ENCODE measurements at regions of chr11 and their contacts with region 1.

Region 1: GRCh38 chr11:33687733-33688479 is 12.7 kb downstream of the C11orf91 start:
- DNase-seq: peak; percentile 88
- H3K4me3 ChIP-seq: no peak overlapping the region
- H3K27ac ChIP-seq: peak overlapping the region; percentile 98
- H3K4me1 ChIP-seq: peaks cover 54% of the 10 kb centered on the region
- H3K27me3 ChIP-seq: no peaks in the 10 kb centered on the region
- CTCF ChIP-seq: peak; percentile 64 to 75

Region 2: DNA sequence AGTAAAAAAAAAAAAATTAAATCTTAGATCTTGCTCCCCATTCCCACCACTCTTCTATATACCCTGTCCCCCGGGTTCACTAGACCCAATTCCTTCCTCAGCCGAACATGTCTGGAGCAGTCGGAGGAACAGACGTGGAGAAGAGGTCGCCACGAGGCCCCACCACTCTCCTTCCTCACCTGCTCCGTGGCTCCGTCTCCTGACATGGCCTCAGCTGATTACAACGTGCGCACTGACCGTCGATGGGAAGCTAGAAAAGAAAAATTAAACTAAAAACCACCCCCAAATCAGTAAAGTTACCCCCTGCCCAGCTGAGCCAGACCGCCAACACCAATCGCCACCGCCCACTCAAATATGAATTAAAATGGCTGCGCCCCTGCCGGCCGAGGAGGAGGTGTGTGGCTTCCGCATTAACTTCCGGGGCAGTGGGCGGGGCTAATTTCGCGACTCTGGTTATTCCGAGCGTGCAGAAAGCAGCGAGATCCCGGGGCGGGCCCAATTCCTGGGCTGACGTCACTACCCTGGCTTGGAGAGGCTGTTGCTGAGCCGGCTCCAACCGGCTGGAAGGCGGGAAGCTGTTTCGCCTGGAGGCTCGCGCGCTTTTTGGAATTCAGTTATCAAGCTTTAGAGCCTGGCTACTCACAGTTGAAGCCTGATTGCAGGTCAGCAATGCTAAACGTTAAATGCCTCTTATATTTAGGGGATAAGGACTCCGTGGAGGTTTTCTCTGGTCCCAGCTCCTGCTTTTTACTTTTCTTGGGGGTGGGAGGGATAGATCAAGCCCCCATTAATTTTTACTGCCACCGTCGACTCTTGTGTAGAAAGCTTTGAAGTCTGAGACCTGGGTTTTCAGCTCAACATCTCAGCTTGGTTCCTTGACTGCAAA is 526.5 kb before region 1 on chr11 and contains the start of gene CSTF3:
- CTCF ChIA-PET with region 1: no interaction called
- dilution Hi-C with region 1: loop called (anchors 5 kb)
- in situ Hi-C with region 1: loop called (anchors 25 kb)
- intact Hi-C with region 1: loop called (anchors 1 kb)
- DNase-seq: peak; percentile 97
- H3K4me3 ChIP-seq: peak within 1 kb of the TSS; percentile 87 to 100 (median 99)
- H3K27ac ChIP-seq: peak within 1 kb of the TSS; percentile 97
- H3K4me1 ChIP-seq: peaks cover 24% of the 10 kb centered on the region
- H3K27me3 ChIP-seq: no peaks in the 10 kb centered on the region
- CTCF ChIP-seq: peak; percentile 2 to 38
- total RNA-seq, gene CSTF3: 21.3 to 32.9 TPM

Region 3: GRCh38 chr11:33362051-33362910 is 325.6 kb before region 1 on chr11:
- CTCF ChIA-PET with region 1: interaction called, 4 read pairs
- dilution Hi-C with region 1: loop called (anchors 25 kb)
- in situ Hi-C with region 1: loop called (anchors 5 kb)
- intact Hi-C with region 1: loop called (anchors 1 kb)
- DNase-seq: peak; percentile 42
- H3K4me3 ChIP-seq: no peak overlapping the region
- H3K27ac ChIP-seq: no peak overlapping the region
- H3K4me1 ChIP-seq: no peaks in the 10 kb centered on the region
- H3K27me3 ChIP-seq: no peaks in the 10 kb centered on the region
- CTCF ChIP-seq: peak; percentile 46 to 49

Region 4: GRCh38 chr11:33633241-33633901 is 54.5 kb before region 1 on chr11:
- CTCF ChIA-PET with region 1: interaction called, 9 read pairs
- dilution Hi-C with region 1: no loop called
- in situ Hi-C with region 1: loop called in 1 of 2 experiments (anchors 5 kb)
- intact Hi-C with region 1: loop called (anchors 2 kb)
- DNase-seq: peak; percentile 98
- H3K4me3 ChIP-seq: no peak overlapping the region
- H3K27ac ChIP-seq: peak overlapping the region; percentile 97
- H3K4me1 ChIP-seq: peaks cover 61% of the 10 kb centered on the region
- H3K27me3 ChIP-seq: no peaks in the 10 kb centered on the region
- CTCF ChIP-seq: no peak

Region 5: DNA sequence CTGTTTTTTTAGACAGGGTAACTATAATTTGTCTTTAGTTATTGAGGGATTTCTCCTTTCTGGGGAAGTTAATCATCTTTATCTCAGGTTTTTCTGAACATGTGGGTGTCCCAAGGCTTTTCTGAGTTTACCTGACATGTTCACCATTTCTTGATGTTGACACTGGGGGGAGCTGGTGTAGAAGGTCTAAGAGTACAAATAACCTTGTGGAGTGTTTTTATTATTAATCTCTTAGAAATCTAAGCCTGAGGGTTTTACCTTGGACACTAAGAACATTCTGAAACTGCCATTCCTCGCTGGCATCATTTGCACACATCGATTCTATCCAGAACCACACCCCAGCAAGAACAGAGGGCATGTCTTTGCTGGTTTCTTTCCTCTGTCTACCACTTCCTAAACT is 28.3 kb after region 1 on chr11:
- CTCF ChIA-PET with region 1: interaction called, 3 read pairs
- dilution Hi-C with region 1: no loop called
- in situ Hi-C with region 1: no loop called
- intact Hi-C with region 1: loop called (anchors 1 kb)
- DNase-seq: peak; percentile 80
- H3K4me3 ChIP-seq: no peak overlapping the region
- H3K27ac ChIP-seq: peak overlapping the region; percentile 93
- H3K4me1 ChIP-seq: peaks cover 59% of the 10 kb centered on the region
- H3K27me3 ChIP-seq: no peaks in the 10 kb centered on the region
- CTCF ChIP-seq: peak; percentile 44 to 58

Region 6: GRCh38 chr11:33742249-33742851 is 54.4 kb after region 1 on chr11:
- CTCF ChIA-PET with region 1: interaction called, 7 read pairs
- dilution Hi-C with region 1: no loop called
- in situ Hi-C with region 1: no loop called
- intact Hi-C with region 1: loop called (anchors 1 kb)
- DNase-seq: no peak
- H3K4me3 ChIP-seq: no peak overlapping the region
- H3K27ac ChIP-seq: no peak overlapping the region
- H3K4me1 ChIP-seq: peaks cover 6% of the 10 kb centered on the region
- H3K27me3 ChIP-seq: no peaks in the 10 kb centered on the region
- CTCF ChIP-seq: peak; percentile 41 to 50

Measured in mammary epithelial cell (primary cell).